Activated CD4-positive, alpha-beta memory T cell treated with anti-CD3 and anti-CD28 coated beads for 36 hours (primary cell): ENCODE measurements at regions of chr6 and their contacts with region 1.

Region 1: DNA sequence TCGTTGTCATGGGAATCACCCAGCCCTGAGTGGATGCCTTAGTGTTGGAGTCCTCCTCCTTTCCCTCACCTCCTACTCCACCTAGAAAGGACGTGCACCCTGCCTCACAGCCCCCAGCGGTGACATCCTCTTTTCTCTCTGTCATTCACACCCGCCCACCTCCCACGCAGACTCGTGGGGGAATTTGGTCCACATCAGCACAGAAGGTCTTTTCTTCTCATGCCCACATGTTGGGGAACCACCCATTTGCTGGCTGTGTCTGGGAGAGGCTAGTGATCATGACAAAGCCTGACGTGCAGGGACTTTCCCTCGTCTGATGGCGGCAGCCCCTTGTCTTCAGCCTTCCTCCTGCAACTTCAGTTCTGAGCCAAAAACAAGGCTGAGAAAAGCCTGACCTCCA is 96.0 kb upstream of the CNKSR3 start:
- DNase-seq: peak; percentile 96
- H3K4me3 Mint-ChIP-seq: peak overlapping the region; percentile 24
- H3K27ac Mint-ChIP-seq: peak overlapping the region; percentile 67
- H3K4me1 Mint-ChIP-seq: peaks cover 43% of the 10 kb centered on the region
- H3K27me3 Mint-ChIP-seq: peaks cover 4% of the 10 kb centered on the region

Region 2: GRCh38 chr6:154301839-154302752 is 304.4 kb before region 1 on chr6:
- CTCF ChIA-PET with region 1: no interaction called
- POLR2A ChIA-PET with region 1: no interaction called
- intact Hi-C with region 1: loop called (anchors 1 kb)
- DNase-seq: peak; percentile 43
- H3K4me3 Mint-ChIP-seq: no peak overlapping the region
- H3K27ac Mint-ChIP-seq: no peak overlapping the region
- H3K4me1 Mint-ChIP-seq: peaks cover 9% of the 10 kb centered on the region
- H3K27me3 Mint-ChIP-seq: peaks cover 2% of the 10 kb centered on the region

Region 3: DNA sequence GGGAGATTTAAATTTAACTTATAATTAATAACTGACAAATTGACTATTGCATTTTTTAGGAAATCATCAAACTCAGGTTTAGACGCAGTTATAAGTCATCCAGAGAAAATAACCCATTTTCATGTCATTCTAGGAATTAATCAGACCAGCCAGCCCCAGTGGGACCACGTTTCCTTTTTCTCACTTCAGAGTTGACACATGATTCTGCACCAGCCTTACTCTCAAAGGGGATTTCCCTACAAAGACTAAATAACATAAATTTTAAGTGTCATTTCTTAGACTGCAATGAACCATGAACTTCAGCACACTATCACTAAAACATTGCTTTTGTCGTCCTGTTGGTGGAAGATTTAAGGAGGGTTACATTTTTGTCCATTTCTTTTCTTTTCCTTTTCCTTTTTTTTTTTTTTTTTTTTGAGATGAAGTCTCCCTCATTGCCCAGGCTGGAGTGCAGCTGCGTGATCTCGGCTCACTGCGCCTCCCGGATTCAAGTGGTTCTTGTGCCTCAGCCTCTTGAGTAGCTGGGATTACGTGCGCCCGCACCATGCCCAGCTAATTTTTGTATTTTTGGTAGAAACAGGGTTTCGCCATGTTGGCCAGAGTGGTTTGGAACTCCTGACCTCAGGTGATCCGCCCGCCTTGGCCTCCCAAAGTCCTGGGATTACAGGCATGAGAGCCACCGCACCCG is 253.4 kb before region 1 on chr6:
- CTCF ChIA-PET with region 1: no interaction called
- POLR2A ChIA-PET with region 1: no interaction called
- intact Hi-C with region 1: loop called (anchors 1 kb)
- DNase-seq: peak; percentile 73
- H3K4me3 Mint-ChIP-seq: no peak overlapping the region
- H3K27ac Mint-ChIP-seq: no peak overlapping the region
- H3K4me1 Mint-ChIP-seq: peaks cover 25% of the 10 kb centered on the region
- H3K27me3 Mint-ChIP-seq: peaks cover 36% of the 10 kb centered on the region

Region 4: GRCh38 chr6:154410619-154411072 is 195.8 kb before region 1 on chr6:
- CTCF ChIA-PET with region 1: no interaction called
- POLR2A ChIA-PET with region 1: no interaction called
- intact Hi-C with region 1: loop called (anchors 2 kb)
- DNase-seq: peak; percentile 77
- H3K4me3 Mint-ChIP-seq: no peak overlapping the region
- H3K27ac Mint-ChIP-seq: no peak overlapping the region
- H3K4me1 Mint-ChIP-seq: peaks cover 9% of the 10 kb centered on the region
- H3K27me3 Mint-ChIP-seq: peaks cover 20% of the 10 kb centered on the region

Region 5: DNA sequence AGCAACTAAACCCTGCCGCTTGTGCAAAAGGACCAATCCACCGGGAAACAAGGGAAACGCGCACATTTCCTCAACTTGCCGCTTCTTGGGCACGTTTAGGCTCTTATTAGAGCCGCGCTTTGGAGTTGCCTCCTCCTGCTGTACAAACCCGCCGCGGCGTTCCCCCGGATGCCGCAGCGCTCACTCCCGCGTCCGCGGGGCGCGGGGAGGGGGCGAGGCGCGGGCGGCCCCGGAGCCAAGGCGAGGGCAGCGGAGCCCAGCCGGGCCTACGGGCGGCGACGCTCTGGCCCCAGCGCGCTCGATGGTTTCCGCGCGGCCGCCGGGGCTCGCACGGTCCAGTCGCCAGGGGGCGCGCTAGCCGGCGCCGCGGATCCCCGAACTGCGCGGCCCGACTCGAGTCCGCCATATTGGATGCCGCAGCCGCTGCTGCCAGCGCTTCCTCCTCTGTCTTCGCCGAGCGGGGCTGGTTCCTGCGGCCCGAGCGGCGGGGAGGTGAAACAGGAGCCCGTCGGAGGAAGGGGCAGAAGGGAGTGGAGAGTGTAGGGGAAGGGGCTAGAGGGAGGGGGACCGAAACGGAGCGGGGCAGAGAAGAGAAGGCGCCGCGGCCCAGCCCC is 126.7 kb after region 1 on chr6 and contains the start of gene SCAF8:
- CTCF ChIA-PET with region 1: no interaction called
- POLR2A ChIA-PET with region 1: no interaction called
- intact Hi-C with region 1: loop called (anchors 1 kb)
- DNase-seq: peak; percentile 86
- H3K4me3 Mint-ChIP-seq: peak within 1 kb of the TSS; percentile 85
- H3K27ac Mint-ChIP-seq: peak within 1 kb of the TSS; percentile 84
- H3K4me1 Mint-ChIP-seq: peaks cover 34% of the 10 kb centered on the region
- H3K27me3 Mint-ChIP-seq: no peaks in the 10 kb centered on the region
- total RNA-seq, gene SCAF8: 30.1 to 31.7 TPM

Region 6: DNA sequence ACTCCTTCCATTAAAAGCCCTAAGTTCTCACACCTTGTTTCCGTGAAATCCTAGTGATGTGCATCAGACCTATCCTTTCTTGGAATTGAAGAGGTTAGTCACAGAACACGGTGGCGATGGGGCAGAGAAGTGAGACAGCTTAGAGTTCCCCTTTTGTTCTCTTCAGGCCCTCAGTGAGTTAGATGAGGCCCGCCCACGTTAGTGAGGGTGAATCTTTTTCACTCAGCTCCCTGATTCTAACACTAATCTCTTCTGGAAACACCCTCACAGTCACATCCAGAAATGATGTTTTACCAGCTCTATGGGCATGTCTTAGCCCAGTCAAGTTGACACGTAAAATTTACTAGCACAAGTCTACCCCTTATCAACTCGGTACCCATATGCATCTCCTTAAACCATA is 1021.8 kb after region 1 on chr6:
- CTCF ChIA-PET with region 1: no interaction called
- POLR2A ChIA-PET with region 1: no interaction called
- intact Hi-C with region 1: loop called (anchors 5 kb)
- DNase-seq: peak; percentile 85
- H3K4me3 Mint-ChIP-seq: peak overlapping the region; percentile 8
- H3K27ac Mint-ChIP-seq: peak overlapping the region; percentile 95
- H3K4me1 Mint-ChIP-seq: peaks cover 18% of the 10 kb centered on the region
- H3K27me3 Mint-ChIP-seq: peaks cover 1% of the 10 kb centered on the region